ENCODE measurements at regions of chr12 and their contacts with region 1.

Region 1: DNA sequence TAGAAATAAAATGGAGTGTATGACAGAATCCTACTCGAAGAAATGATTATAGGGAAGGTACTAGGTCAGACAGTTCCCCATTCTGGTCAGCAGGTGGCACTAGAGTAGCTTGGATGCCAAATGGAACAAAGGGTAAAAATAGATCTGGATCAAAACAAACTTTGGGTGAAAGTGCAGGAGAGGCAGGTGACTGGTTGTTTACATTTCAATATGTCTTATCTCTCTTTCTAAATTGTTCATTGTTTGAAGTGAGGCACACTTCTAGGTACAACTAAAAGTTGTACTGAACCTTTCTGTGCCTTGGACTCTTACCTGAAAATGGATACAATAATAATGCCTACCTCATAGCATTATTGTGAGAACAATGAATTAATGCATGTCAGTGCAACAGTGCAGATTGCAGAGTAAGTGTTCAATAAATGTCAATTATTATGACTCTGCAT is 62.0 kb upstream of the OSBPL8 start:
- DNase-seq: peak; percentile 83
- H3K4me3 Mint-ChIP-seq: no peak overlapping the region
- H3K27ac Mint-ChIP-seq: no peak overlapping the region
- H3K4me1 Mint-ChIP-seq: peaks cover 5% of the 10 kb centered on the region
- H3K27me3 Mint-ChIP-seq: no peaks in the 10 kb centered on the region
- CTCF ChIP-seq: peak; percentile 91

Region 2: DNA sequence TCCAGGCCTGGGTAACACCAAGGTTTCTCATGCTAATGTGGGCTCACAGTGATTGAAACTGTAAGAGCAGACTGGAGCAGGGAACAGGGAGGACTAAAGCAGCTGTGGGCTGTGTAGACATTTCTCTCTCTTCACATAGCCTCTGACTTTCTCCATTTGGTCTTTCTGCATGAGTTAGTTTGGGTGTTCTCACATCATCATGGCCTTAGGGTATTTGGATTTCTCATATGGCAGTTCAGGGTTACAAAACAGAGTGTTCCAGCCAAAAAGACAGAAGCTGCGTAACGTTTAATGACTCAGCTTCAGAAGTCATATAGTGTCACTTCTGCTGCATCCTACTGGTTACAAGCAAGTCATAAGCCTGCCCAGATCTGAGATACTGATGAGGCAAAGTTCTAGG is 10.1 kb before region 1 on chr12:
- CTCF ChIA-PET with region 1: interaction called, 4 read pairs
- POLR2A ChIA-PET with region 1: interaction called, 10 read pairs
- intact Hi-C with region 1: no loop called
- DNase-seq: peak; percentile 98
- H3K4me3 Mint-ChIP-seq: peak overlapping the region; percentile 44
- H3K27ac Mint-ChIP-seq: peak overlapping the region; percentile 90
- H3K4me1 Mint-ChIP-seq: peaks cover 26% of the 10 kb centered on the region
- H3K27me3 Mint-ChIP-seq: no peaks in the 10 kb centered on the region
- CTCF ChIP-seq: no peak

Region 3: DNA sequence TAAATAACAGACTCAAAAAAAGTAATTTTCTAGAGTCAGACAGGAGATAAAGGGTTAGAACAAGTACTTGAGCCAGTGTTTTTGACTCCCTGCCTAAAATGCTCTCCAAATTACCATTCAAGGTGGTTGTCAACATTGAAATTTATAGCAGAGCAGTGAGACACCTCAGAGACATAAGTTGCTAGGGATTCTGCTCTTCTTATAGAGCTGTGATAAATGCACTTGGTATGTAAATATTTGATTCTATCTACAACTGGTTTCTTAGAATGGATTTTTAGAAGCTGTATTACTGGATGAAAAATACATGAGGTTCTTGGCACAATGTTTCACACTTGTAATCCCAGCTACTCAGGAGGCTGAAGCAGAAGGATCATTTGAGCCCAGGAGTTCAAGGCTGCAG is 21.8 kb after region 1 on chr12:
- CTCF ChIA-PET with region 1: no interaction called
- POLR2A ChIA-PET with region 1: no interaction called
- intact Hi-C with region 1: no loop called
- DNase-seq: no peak
- H3K4me3 Mint-ChIP-seq: no peak overlapping the region
- H3K27ac Mint-ChIP-seq: no peak overlapping the region
- H3K4me1 Mint-ChIP-seq: no peaks in the 10 kb centered on the region
- H3K27me3 Mint-ChIP-seq: no peaks in the 10 kb centered on the region
- CTCF ChIP-seq: no peak

Region 4: DNA sequence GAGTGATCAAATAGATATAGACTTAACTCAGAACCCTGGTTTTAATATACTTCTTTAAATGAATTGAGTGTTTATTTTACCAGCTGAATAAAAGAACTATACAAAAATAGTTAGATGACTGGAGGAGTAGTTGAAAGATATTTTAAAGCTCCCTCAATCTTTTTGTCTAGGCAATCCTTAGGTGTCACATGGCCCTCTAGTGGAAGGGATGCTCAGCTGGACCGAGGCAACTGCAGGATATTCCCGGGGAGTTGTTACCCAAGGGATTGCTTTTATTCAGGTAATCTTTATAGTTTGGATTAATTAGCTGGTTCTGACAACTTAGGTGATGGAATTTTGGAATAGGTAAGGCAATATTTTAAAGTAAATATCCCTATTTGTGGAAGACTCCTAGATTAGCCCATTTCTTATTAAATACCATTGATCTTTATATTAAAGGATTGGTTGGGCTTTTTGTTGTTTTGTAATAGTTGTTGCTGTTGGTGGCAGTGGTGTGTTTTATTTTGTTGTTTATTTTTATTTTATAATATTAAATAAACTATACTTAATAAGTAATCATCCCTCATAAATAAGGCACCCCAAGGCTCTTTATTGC is 199.4 kb after region 1 on chr12:
- CTCF ChIA-PET with region 1: interaction called, 20 read pairs
- POLR2A ChIA-PET with region 1: no interaction called
- intact Hi-C with region 1: loop called (anchors 1 kb)
- DNase-seq: peak; percentile 60
- H3K4me3 Mint-ChIP-seq: no peak overlapping the region
- H3K27ac Mint-ChIP-seq: no peak overlapping the region
- H3K4me1 Mint-ChIP-seq: no peaks in the 10 kb centered on the region
- H3K27me3 Mint-ChIP-seq: no peaks in the 10 kb centered on the region
- CTCF ChIP-seq: peak; percentile 50

Region 5: DNA sequence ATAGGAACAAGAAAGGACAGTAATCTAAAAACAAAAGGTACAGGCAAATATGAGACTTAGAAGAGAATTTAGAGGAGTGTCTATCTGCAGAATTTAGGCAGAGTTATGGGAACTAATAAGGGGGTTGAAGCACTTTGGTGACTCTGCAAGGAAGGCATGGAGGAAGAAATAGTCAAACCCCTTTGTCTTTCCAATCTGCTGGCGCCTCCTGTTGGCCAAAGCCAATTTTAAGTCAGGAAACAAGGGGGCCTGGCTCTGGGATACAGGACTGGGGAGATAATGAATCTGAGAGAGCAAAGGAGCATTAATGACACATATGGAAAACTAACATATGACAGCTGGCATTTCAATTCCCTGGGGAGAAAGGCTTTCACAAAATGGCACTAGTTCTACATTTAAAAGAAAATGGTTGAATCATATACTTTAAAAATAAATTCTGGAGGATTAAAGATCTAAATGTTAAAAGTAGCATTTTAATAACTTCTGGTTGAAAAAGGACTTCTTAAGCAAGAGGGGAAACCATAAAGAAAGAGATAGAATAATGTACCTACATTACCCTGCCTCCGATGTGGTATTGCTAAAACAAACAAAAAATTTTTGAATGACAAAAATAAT is 305.7 kb after region 1 on chr12:
- CTCF ChIA-PET with region 1: no interaction called
- POLR2A ChIA-PET with region 1: no interaction called
- intact Hi-C with region 1: loop called (anchors 1 kb)
- DNase-seq: peak; percentile 63
- H3K4me3 Mint-ChIP-seq: no peak overlapping the region
- H3K27ac Mint-ChIP-seq: no peak overlapping the region
- H3K4me1 Mint-ChIP-seq: no peaks in the 10 kb centered on the region
- H3K27me3 Mint-ChIP-seq: peaks cover 30% of the 10 kb centered on the region
- CTCF ChIP-seq: peak; percentile 33

Measured in MCF 10A (cell line).